H1 (cell line): ENCODE measurements at regions of chr12 and their contacts with region 1.

Region 1: GRCh38 chr12:21451529-21451928 is 14.1 kb downstream of the PYROXD1 start:
- DNase-seq: no peak
- H3K4me3 ChIP-seq: no peak overlapping the region
- H3K27ac ChIP-seq: no peak overlapping the region
- H3K4me1 ChIP-seq: no peaks in the 10 kb centered on the region
- H3K27me3 ChIP-seq: no peaks in the 10 kb centered on the region
- CTCF ChIP-seq: peak in 2 of 3 experiments; percentile 35 to 45; a peak in 2 of 4 replicates
- EP300 ChIP-seq: no peak
- POLR2A ChIP-seq: no peak
- RAD21 ChIP-seq: peak; percentile 66 to 68

Region 2: GRCh38 chr12:21248679-21249078 is 202.8 kb before region 1 on chr12:
- CTCF ChIA-PET with region 1: interaction called, 10 read pairs
- POLR2A ChIA-PET with region 1: no interaction called
- DNase-seq: no peak
- H3K4me3 ChIP-seq: no peak overlapping the region
- H3K27ac ChIP-seq: no peak overlapping the region
- H3K4me1 ChIP-seq: peaks cover 0 to 3% (median 0%) of the 10 kb centered on the region in 4 experiments; a peak in 1 of 7 replicates
- H3K27me3 ChIP-seq: no peaks in the 10 kb centered on the region
- CTCF ChIP-seq: no peak
- EP300 ChIP-seq: no peak
- POLR2A ChIP-seq: no peak
- RAD21 ChIP-seq: 0 out of 4 replicates have a peak, but pooled peaks of 1 of the 2 experiments have one; percentile 5

Region 3: DNA sequence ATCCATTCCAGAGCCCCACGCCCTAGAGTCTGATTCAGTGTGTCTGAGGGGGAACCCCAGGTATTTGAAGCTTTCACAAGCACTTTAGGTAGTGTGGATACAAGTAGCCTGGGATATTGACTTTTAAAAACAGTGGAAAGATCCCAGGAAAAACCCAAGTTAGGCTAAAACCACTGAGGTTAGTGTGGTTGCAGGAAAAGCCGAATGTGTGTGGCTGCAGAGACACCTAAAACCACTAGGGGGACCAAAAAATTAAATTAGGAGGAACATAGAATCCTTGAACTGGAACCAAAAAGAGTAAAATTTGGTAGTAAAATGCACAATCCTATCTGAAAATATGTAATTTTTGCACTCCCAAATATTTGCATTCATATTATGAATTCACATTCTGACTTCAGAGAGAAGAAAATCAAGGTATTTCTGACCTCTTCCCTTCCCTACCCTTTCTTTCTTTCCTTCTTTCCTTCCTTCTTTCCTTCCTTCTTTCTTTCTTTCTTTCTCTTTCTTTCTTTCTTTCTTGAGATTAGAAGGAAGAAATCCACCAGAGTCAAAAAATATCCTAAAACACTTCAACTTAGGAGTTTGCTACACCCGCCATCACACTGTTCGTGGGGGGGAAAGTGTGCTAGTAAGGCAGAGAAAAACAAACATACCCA is 154.7 kb before region 1 on chr12:
- CTCF ChIA-PET with region 1: interaction called, 14 read pairs
- POLR2A ChIA-PET with region 1: no interaction called
- DNase-seq: no peak
- H3K4me3 ChIP-seq: no peak overlapping the region
- H3K27ac ChIP-seq: no peak overlapping the region
- H3K4me1 ChIP-seq: no peaks in the 10 kb centered on the region
- H3K27me3 ChIP-seq: no peaks in the 10 kb centered on the region
- CTCF ChIP-seq: peak in 2 of 3 experiments; percentile 38 to 56; a peak in 2 of 4 replicates
- EP300 ChIP-seq: no peak
- POLR2A ChIP-seq: no peak
- RAD21 ChIP-seq: peak; percentile 36 to 40

Region 4: GRCh38 chr12:21308785-21309184 is 142.7 kb before region 1 on chr12:
- CTCF ChIA-PET with region 1: interaction called, 40 read pairs
- POLR2A ChIA-PET with region 1: no interaction called
- DNase-seq: no peak
- H3K4me3 ChIP-seq: no peak overlapping the region
- H3K27ac ChIP-seq: no peak overlapping the region
- H3K4me1 ChIP-seq: no peaks in the 10 kb centered on the region
- H3K27me3 ChIP-seq: no peaks in the 10 kb centered on the region
- CTCF ChIP-seq: no peak; a peak in 1 of 4 replicates
- EP300 ChIP-seq: no peak
- POLR2A ChIP-seq: no peak
- RAD21 ChIP-seq: 0 out of 4 replicates have a peak, but pooled peaks of 1 of the 2 experiments have one; percentile 11

Region 5: DNA sequence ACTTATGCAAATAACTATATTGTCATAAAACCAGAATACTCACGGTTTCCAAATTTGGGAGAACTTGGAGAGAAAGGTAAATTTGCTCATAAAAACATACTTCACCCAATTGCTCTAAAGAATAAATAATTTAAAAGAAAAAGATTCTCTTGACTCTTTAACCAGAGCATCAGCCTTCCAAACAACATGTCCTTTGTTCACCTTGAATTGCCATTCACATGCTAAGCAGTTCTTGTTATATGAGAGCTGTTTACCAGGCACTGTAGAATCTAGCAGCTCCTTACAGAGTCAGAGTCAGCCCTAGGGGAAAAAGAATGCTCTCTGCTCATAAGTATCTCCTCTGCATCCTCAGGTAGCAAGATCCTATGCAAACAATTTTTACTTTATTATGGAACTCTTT is 127.0 kb before region 1 on chr12:
- CTCF ChIA-PET with region 1: interaction called, 18 read pairs
- POLR2A ChIA-PET with region 1: no interaction called
- DNase-seq: peak in 1 of 2 experiments; percentile 21
- H3K4me3 ChIP-seq: peak overlapping the region in 1 of 4 experiments; percentile 25; a peak in 1 of 8 replicates
- H3K27ac ChIP-seq: peak overlapping the region; percentile 50; the same call in 1 of the 2 replicates
- H3K4me1 ChIP-seq: peaks cover 0 to 9% (median 4%) of the 10 kb centered on the region in 4 experiments; a peak in 3 of 7 replicates
- H3K27me3 ChIP-seq: no peaks in the 10 kb centered on the region
- CTCF ChIP-seq: no peak
- EP300 ChIP-seq: no peak
- POLR2A ChIP-seq: no peak
- RAD21 ChIP-seq: no peak

Region 6: GRCh38 chr12:21370845-21371449 is 80.6 kb before region 1 on chr12:
- CTCF ChIA-PET with region 1: no interaction called
- POLR2A ChIA-PET with region 1: no interaction called
- DNase-seq: no peak
- H3K4me3 ChIP-seq: no peak overlapping the region
- H3K27ac ChIP-seq: no peak overlapping the region
- H3K4me1 ChIP-seq: peaks cover 0 to 5% (median under 1%) of the 10 kb centered on the region in 4 experiments; a peak in 1 of 7 replicates
- H3K27me3 ChIP-seq: no peaks in the 10 kb centered on the region
- CTCF ChIP-seq: no peak
- EP300 ChIP-seq: no peak
- POLR2A ChIP-seq: no peak
- RAD21 ChIP-seq: 0 out of 4 replicates have a peak, but pooled peaks of 1 of the 2 experiments have one; percentile 1

Region 7: DNA sequence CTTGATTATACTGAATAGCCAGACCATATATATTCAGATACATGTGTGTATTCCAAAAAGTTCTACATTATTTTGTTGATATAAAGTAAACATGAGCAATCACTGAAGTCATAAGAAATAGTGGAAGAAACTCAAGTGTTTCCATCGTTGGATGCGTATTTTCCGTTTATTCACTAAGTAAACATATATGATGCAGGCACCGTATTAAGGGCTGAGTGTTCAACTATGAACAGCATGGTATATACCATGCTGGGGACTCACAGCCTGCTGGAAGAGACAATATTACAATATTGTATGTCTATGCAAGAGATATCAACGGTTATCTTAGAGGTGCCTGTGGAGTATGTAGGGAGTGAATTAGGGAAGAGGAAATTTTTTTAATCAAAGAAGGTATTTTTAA is 12.9 kb before region 1 on chr12:
- CTCF ChIA-PET with region 1: interaction called, 10 read pairs
- POLR2A ChIA-PET with region 1: interaction called, 6 read pairs
- DNase-seq: no peak
- H3K4me3 ChIP-seq: peak overlapping the region; percentile 65 to 79 (median 78); a peak in 6 of 8 replicates
- H3K27ac ChIP-seq: no peak overlapping the region
- H3K4me1 ChIP-seq: no peaks in the 10 kb centered on the region
- H3K27me3 ChIP-seq: no peaks in the 10 kb centered on the region
- CTCF ChIP-seq: no peak
- EP300 ChIP-seq: no peak
- POLR2A ChIP-seq: no peak
- RAD21 ChIP-seq: no peak

Region 8: GRCh38 chr12:21501379-21501956 is 49.9 kb after region 1 on chr12 and contains the starts of genes GOLT1B and RECQL:
- CTCF ChIA-PET with region 1: no interaction called
- POLR2A ChIA-PET with region 1: no interaction called
- DNase-seq: peak; percentile 87 to 89
- H3K4me3 ChIP-seq: peak within 1 kb of the TSS; percentile 72 to 93 (median 84)
- H3K27ac ChIP-seq: peak within 1 kb of the TSS; percentile 83
- H3K4me1 ChIP-seq: peaks cover 0 to 6% (median 2%) of the 10 kb centered on the region in 4 experiments; a peak in 4 of 7 replicates
- H3K27me3 ChIP-seq: no peaks in the 10 kb centered on the region
- CTCF ChIP-seq: no peak
- EP300 ChIP-seq: no peak
- POLR2A ChIP-seq: peak; percentile 82 to 83
- RAD21 ChIP-seq: no peak
- total RNA-seq, gene GOLT1B: 37.4 and 38.3 TPM in 2 replicates
- total RNA-seq, gene RECQL: 37.7 and 40.3 TPM in 2 replicates